Activated B cell treated with CpG ODN at 0.5 μM for 24 hours (primary cell): ENCODE measurements at regions of chr11 and their contacts with region 1.

Region 1: GRCh38 chr11:117946842-117947526 is 17.8 kb upstream of the TMPRSS13 start:
- DNase-seq: peak; percentile 79
- ATAC-seq: peak; percentile 34
- H3K4me3 Mint-ChIP-seq: no peak overlapping the region
- H3K27ac Mint-ChIP-seq: peak overlapping the region; percentile 62
- H3K4me1 Mint-ChIP-seq: peaks cover 60% of the 10 kb centered on the region
- H3K27me3 Mint-ChIP-seq: peaks cover 2% of the 10 kb centered on the region
- CTCF ChIP-seq: peak; percentile 86

Region 2: DNA sequence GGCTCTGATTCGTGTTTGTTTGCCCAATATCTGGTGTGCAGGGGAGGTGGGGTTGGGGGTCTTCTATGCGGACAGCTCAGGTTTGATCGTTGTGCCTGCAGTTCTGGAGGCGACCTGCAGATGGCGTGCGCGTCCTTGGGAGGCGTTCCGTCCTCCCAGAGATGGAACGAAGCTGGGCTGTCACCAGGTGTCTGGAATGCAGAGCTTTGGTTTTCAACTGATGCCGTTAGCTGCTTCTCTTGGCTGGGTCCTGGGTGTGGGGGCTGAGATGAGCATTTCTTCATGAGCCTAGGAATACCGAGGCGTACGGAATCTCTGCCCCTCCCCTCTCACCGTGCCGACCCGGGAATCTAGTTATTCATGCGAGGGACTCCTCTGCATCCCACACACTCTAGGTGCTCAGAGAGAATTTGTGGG is 520.7 kb before region 1 on chr11:
- CTCF ChIA-PET with region 1: interaction called, 27 read pairs
- POLR2A ChIA-PET with region 1: no interaction called
- intact Hi-C with region 1: loop called (anchors 1 kb)
- DNase-seq: peak; percentile 52
- ATAC-seq: peak; percentile 62
- H3K4me3 Mint-ChIP-seq: no peak overlapping the region
- H3K27ac Mint-ChIP-seq: no peak overlapping the region
- H3K4me1 Mint-ChIP-seq: peaks cover 7% of the 10 kb centered on the region
- H3K27me3 Mint-ChIP-seq: peaks cover 7% of the 10 kb centered on the region
- CTCF ChIP-seq: peak; percentile 23

Region 3: DNA sequence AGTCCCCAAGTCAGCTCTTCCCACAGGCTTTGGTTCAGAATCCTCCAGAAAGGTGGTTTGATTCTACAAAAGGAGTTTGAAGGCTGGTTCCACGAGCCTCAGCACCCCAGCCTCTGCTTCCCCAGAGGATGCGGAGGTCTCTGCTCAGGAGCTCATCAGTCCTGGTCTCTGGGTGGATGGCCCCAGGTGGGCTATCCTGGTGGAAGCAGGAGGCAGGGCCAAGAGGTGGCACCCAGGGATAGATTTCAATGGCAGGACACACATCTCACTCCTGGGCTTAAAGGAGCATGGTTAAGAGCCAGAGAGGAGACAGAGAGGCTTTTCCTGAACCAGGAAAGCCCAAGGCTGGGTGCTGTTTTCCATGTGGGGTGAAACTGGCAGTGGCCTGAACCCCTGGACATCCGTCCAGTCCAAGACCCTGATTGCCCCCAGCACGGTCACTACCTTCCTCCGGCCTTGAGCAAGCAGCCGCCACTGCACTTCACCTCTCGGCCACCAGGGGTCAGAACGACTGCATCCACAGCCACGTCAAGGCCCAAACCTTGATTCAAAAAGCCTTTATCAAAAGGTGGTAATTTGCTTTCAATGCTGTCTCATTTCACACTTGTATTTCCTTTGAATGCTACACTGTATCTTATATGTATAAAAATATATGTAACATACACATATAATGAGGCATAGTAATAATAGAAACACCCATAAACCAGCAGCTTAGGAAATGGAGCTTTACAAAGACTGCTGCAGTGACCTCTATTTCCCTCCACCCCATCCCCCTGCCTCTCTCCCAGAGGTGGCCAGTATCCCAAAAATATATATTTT is 103.1 kb before region 1 on chr11:
- CTCF ChIA-PET with region 1: interaction called, 129 read pairs
- POLR2A ChIA-PET with region 1: interaction called, 10 read pairs
- intact Hi-C with region 1: loop called (anchors 1 kb)
- DNase-seq: peak; percentile 79
- ATAC-seq: peak; percentile 98
- H3K4me3 Mint-ChIP-seq: no peak overlapping the region
- H3K27ac Mint-ChIP-seq: no peak overlapping the region
- H3K4me1 Mint-ChIP-seq: no peaks in the 10 kb centered on the region
- H3K27me3 Mint-ChIP-seq: peaks cover 1% of the 10 kb centered on the region
- CTCF ChIP-seq: peak; percentile 40

Region 4: DNA sequence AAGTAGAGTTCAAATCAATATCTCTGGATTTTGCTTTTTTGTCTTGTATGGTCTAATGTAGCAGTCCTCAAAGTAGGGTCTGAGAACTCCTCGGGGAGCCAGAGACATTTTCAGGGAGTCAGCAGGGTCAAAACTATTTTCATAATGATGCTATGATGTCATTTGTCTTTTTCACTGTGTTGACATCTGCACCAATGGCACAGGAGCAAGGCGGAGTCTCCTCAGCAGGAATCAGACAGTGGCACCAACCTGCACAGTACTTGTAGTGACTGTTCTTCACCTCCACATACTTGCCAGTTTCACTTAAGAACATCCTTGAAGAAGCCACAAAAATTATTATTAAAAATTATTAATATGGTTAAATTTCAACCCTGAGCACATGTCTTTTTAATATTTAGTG is 55.6 kb before region 1 on chr11:
- CTCF ChIA-PET with region 1: no interaction called
- POLR2A ChIA-PET with region 1: no interaction called
- intact Hi-C with region 1: no loop called
- DNase-seq: no peak
- ATAC-seq: no peak
- H3K4me3 Mint-ChIP-seq: no peak overlapping the region
- H3K27ac Mint-ChIP-seq: no peak overlapping the region
- H3K4me1 Mint-ChIP-seq: peaks cover 6% of the 10 kb centered on the region
- H3K27me3 Mint-ChIP-seq: peaks cover 36% of the 10 kb centered on the region
- CTCF ChIP-seq: no peak

Region 5: DNA sequence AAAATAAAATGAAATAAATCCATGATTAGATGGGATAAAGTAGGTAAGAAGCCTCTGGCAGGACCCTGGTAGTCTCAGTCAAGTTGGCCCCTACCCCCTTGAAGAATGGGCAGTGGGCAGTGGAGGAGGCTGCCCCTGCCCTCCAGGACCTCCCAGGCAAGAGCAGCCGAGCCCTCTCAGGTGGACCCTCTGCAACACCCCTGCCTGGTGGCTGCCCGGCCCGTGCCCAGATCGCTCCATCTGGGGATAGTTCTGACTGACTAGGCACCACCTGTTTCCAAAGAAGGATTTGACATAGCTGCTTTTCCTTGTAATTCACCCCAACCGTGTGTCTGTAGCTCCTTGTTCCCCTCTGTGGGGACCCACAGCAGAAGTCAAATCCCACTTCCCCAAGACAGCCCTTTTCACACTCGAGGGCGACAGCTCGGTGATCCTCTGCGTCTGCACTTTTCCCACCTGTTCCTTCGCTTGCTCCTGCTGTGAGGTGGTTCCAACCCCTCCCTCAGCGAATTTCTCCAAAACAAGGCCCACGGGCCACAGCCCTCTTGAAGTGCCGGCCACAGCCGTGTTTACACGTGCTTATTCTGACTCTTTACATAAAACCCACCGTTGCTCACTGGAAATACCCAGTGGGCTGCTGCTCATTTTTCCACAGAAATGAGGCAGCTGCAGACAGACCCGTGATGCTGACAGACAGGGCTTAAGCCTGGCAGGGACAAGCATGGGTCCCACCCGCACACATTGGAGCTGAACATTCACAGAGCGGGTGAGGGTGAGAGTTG is 12.3 kb before region 1 on chr11:
- CTCF ChIA-PET with region 1: interaction called, 13 read pairs
- POLR2A ChIA-PET with region 1: no interaction called
- intact Hi-C with region 1: no loop called
- DNase-seq: no peak
- ATAC-seq: no peak
- H3K4me3 Mint-ChIP-seq: no peak overlapping the region
- H3K27ac Mint-ChIP-seq: no peak overlapping the region
- H3K4me1 Mint-ChIP-seq: peaks cover 14% of the 10 kb centered on the region
- H3K27me3 Mint-ChIP-seq: no peaks in the 10 kb centered on the region
- CTCF ChIP-seq: no peak

Region 6: GRCh38 chr11:118002541-118003423 is 55.8 kb after region 1 on chr11:
- CTCF ChIA-PET with region 1: interaction called, 16 read pairs
- POLR2A ChIA-PET with region 1: interaction called, 930 read pairs
- intact Hi-C with region 1: no loop called
- DNase-seq: no peak
- ATAC-seq: peak; percentile 21
- H3K4me3 Mint-ChIP-seq: peak overlapping the region; percentile 52
- H3K27ac Mint-ChIP-seq: peak overlapping the region; percentile 98
- H3K4me1 Mint-ChIP-seq: peaks cover 93% of the 10 kb centered on the region
- H3K27me3 Mint-ChIP-seq: no peaks in the 10 kb centered on the region
- CTCF ChIP-seq: no peak

Region 7: GRCh38 chr11:118051611-118052461 is 104.9 kb after region 1 on chr11:
- CTCF ChIA-PET with region 1: interaction called, 294 read pairs
- POLR2A ChIA-PET with region 1: interaction called, 84 read pairs
- intact Hi-C with region 1: loop called (anchors 1 kb)
- DNase-seq: no peak
- ATAC-seq: peak; percentile 77
- H3K4me3 Mint-ChIP-seq: peak overlapping the region; percentile 5
- H3K27ac Mint-ChIP-seq: peak overlapping the region; percentile 70
- H3K4me1 Mint-ChIP-seq: peaks cover 44% of the 10 kb centered on the region
- H3K27me3 Mint-ChIP-seq: no peaks in the 10 kb centered on the region
- CTCF ChIP-seq: no peak